PC-9 (cell line): ENCODE measurements at regions of chr19 and their contacts with region 1.

Region 1: DNA sequence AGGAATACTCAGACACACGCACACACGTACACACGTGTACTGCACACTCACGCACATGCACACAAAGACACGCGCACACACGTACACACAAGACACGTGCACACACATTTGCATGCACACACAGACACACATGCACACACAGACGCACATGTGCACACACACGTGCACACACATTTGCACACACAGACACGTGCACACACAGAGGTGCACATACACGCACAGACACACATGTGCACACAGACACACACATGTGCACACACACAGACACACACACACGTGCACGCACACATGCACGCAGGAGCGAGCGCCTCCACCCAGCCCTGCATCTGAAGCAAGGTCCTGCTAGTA is 81.1 kb downstream of the GADD45B start:
- DNase-seq: no peak
- H3K4me3 ChIP-seq: no peak overlapping the region
- H3K27ac ChIP-seq: no peak overlapping the region
- H3K4me1 ChIP-seq: 0 out of 2 replicates have a peak, but pooled peaks cover 16% of the 10 kb centered on the region
- H3K27me3 ChIP-seq: no peaks in the 10 kb centered on the region
- CTCF ChIP-seq: no peak

Region 2: DNA sequence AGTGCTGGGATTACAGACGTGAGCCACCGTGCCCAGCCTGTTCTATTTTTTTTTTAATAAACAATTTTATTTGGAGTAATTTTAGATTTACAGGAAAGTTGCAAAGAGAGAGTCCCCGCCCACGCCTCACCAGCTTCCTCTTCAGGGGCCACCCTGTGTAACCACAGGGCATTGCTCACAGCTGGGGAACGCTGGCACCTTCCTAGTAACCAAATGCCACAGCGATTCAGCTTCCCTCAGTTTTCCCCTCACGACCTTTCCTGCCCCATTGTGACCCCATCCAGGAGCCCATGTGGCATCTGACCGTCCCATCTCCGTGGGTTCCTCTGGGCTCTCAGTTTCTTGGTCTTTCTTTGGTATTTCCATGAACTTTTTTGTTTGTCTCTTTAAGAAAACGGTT is 61.5 kb after region 1 on chr19:
- CTCF ChIA-PET with region 1: interaction called, 10 read pairs
- POLR2A ChIA-PET with region 1: no interaction called
- intact Hi-C with region 1: no loop called
- DNase-seq: peak; percentile 67 to 70
- H3K4me3 ChIP-seq: no peak overlapping the region
- H3K27ac ChIP-seq: peak overlapping the region; percentile 69
- H3K4me1 ChIP-seq: peaks cover 16% of the 10 kb centered on the region
- H3K27me3 ChIP-seq: no peaks in the 10 kb centered on the region
- CTCF ChIP-seq: no peak

Region 3: DNA sequence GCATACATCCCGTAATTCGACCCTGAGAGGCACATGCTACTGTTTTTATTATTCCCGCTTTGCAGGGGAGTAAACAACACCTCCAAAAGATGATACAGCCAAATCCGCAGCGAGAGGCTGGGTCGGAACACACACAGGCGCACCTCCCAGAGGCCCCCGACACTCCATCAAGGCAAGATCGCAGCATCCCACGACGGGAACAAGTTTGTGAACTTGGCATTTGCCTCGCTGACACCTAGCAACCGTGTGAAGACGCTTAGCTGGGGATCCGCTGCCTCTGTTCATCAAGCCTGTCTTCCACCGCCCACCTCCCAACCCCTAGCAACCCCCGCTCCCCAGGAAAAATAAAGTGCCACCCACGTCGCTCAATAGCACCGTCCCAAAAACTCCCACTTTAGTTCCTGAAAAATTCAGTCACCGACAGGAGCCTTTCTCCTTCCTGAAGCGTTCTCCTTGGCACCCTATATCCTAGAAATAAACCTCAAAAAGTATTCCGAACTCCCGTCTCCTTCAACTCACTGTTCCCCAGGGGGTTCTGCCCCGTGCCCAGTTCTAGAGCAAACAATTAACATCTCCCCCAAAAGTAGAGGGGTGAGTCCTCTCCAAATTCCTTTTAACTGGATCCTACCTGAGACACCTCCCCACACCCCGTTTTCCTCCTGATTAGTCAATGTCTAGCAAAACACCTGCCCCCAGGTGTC is 143.7 kb after region 1 on chr19:
- CTCF ChIA-PET with region 1: no interaction called
- POLR2A ChIA-PET with region 1: interaction called, 19 read pairs
- intact Hi-C with region 1: no loop called
- DNase-seq: no peak
- H3K4me3 ChIP-seq: no peak overlapping the region
- H3K27ac ChIP-seq: no peak overlapping the region
- H3K4me1 ChIP-seq: no peaks in the 10 kb centered on the region
- H3K27me3 ChIP-seq: 0 out of 2 replicates have a peak, but pooled peaks cover 4% of the 10 kb centered on the region
- CTCF ChIP-seq: no peak

Region 4: GRCh38 chr19:2900296-2901252 is 343.5 kb after region 1 on chr19 and contains the start of gene ZNF57:
- CTCF ChIA-PET with region 1: no interaction called
- POLR2A ChIA-PET with region 1: no interaction called
- intact Hi-C with region 1: no loop called
- DNase-seq: peak; percentile 95 to 96
- H3K4me3 ChIP-seq: peak within 1 kb of the TSS; percentile 79
- H3K27ac ChIP-seq: no peak within 1 kb of the TSS
- H3K4me1 ChIP-seq: no peaks in the 10 kb centered on the region
- H3K27me3 ChIP-seq: no peaks in the 10 kb centered on the region
- CTCF ChIP-seq: no peak
- total RNA-seq, gene ZNF57: 2.6 TPM in 2 replicates